Tibial artery (tissue), 4 donors: ENCODE measurements at regions of chr15 and their contacts with region 1.

Region 1: GRCh38 chr15:89904519-89904918 is 8.2 kb downstream of the ARPIN start:
- DNase-seq: no peak
- H3K4me3 ChIP-seq: no peak overlapping the region
- H3K27ac ChIP-seq: no peak overlapping the region
- H3K4me1 ChIP-seq: no peaks in the 10 kb centered on the region
- H3K27me3 ChIP-seq: no peaks in the 10 kb centered on the region
- CTCF ChIP-seq: no peak

Region 2: GRCh38 chr15:89728254-89728653 is 176.3 kb before region 1 on chr15:
- intact Hi-C with region 1: no loop called
- DNase-seq: no peak
- H3K4me3 ChIP-seq: no peak overlapping the region
- H3K27ac ChIP-seq: no peak overlapping the region
- H3K4me1 ChIP-seq: no peaks in the 10 kb centered on the region
- H3K27me3 ChIP-seq: no peaks in the 10 kb centered on the region
- CTCF ChIP-seq: no peak

Region 3: DNA sequence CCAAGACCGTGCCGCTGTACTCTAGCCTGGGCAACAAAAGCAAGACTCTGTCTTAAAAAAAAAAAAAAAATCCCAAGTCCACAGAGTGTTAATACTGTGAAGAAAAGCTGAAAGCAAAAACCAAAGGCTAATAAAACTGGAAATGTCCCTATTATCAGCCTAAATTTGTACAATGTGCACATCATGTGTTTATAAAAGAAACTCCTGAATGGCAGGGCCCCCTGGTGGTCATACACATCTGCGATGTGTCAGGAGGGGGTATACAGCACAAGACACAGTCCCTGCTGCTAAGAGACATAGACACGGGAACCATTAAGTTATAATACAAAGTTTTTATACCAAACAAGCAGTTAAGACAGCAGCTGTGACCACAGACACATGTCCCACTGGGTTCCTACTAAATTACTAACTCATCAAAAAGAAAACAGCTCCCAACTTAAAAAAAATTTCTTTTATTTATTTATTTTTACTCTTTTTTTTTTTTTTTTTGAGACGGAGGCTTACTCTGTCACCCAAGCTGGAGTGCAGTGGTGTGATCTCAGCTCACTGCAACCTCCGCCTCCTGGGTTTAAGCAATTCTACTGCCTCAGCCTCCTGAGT is 166.8 kb after region 1 on chr15:
- intact Hi-C with region 1: loop called (anchors 5 kb)
- DNase-seq: peak; percentile 87 to 90
- H3K4me3 ChIP-seq: no peak overlapping the region
- H3K27ac ChIP-seq: peak overlapping the region in 1 of 2 donors; percentile 6
- H3K4me1 ChIP-seq: peaks cover 0 to 11% (median 2%) of the 10 kb centered on the region in 4 donors
- H3K27me3 ChIP-seq: no peaks in the 10 kb centered on the region
- CTCF ChIP-seq: peak; percentile 66 to 79

Region 4: GRCh38 chr15:90184786-90185569 is 280.5 kb after region 1 on chr15:
- intact Hi-C with region 1: no loop called
- DNase-seq: peak in 1 of 2 donors; percentile 89
- H3K4me3 ChIP-seq: peak overlapping the region; percentile 83 to 94
- H3K27ac ChIP-seq: peak overlapping the region; percentile 94 to 97
- H3K4me1 ChIP-seq: peaks cover 0 to 39% (median 22%) of the 10 kb centered on the region in 4 donors
- H3K27me3 ChIP-seq: no peaks in the 10 kb centered on the region
- CTCF ChIP-seq: no peak